Mammary epithelial cell (primary cell): ENCODE measurements at regions of chr11 and their contacts with region 1.

Region 1: DNA sequence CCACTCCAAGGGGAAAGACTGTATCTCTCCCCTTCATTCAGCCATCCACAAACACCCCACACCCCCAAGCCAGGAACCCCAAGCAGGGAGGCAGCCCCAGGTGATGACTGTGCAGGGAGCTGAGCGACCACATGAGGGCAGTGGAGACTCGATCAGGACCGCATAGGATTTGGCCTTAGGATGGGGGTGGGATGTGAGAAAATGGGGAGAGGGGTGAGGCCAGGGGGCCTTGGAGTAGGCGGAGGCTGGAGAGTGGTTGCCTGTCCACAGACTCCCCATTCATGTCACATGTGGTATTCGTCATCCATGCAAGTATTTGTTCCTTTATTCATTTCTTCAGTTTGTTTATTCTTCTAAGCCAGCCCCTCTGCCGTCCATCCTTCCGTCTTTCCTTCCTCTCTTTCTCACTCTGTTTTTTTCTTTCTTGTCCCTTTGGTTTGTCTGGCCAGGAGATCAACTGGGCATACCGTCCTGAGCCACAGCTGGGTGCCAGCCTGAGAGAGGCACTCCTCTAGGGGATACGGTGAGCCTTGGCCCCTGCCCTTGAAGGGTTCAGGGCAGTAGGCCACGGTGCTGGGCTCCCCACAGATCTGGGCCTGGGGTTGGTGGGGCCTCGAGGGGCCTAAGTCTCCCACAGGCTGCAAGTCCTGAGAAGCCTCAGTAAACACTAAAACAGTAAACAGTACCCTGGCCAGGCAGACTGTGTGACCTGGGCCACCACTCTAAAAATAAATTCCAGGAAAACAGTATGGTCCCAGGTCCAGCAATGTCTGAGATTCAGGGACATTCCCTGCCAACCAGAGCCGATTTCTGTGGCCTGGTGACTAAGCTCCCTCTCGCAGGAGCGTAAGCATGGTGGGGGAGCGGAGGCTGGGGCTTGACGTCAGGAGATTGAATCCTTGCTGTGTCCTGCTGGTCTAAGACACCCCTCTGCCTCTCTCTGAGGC is 2.5 kb upstream of the RHOD start:
- DNase-seq: peak; percentile 57
- H3K4me3 ChIP-seq: no peak overlapping the region
- H3K27ac ChIP-seq: peak overlapping the region; percentile 99
- H3K4me1 ChIP-seq: peaks cover 42% of the 10 kb centered on the region
- H3K27me3 ChIP-seq: no peaks in the 10 kb centered on the region
- CTCF ChIP-seq: peak; percentile 89 to 95

Region 2: DNA sequence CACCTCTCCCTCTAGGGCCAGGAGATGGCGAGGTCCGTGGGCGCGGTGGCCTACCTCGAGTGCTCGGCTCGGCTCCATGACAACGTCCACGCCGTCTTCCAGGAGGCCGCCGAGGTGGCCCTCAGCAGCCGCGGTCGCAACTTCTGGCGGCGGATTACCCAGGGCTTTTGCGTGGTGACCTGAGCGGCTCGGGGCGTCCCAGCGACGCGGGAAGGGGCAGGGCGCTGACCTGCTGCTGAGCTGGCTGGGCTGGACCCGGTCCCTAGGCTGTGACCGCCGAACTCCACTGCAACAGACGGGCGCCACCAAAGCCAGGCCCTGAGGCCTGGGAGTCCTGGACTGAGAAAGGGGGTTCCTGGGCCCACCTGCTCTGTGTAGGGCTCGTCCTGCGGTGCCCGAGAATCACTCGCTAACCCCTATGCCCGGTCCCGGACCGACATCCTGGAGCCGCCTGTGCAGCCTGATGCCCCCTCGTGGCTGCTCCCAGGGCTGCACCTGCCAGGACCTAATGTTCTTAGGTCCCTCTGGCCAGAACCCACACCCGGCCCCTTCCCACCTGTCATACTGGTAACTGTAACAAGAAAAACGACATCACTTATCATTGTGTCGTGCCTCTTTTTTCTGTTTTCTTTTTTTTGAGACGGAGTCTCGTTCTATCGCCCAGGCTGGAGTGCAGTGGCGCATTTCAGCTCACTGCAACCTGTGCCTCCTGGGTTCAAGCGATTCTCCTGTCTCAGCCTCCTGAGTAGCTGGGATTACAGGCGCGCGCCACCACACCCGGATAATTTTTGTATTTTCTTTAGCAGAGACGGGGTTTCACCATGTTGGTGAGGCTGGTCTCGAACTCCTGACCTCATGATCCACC is 17.5 kb after region 1 on chr11:
- CTCF ChIA-PET with region 1: no interaction called
- dilution Hi-C with region 1: no loop called
- in situ Hi-C with region 1: no loop called
- intact Hi-C with region 1: loop called (anchors 1 kb)
- DNase-seq: no peak
- H3K4me3 ChIP-seq: no peak overlapping the region
- H3K27ac ChIP-seq: no peak overlapping the region
- H3K4me1 ChIP-seq: no peaks in the 10 kb centered on the region
- H3K27me3 ChIP-seq: no peaks in the 10 kb centered on the region
- CTCF ChIP-seq: peak; percentile 55 to 83

Region 3: DNA sequence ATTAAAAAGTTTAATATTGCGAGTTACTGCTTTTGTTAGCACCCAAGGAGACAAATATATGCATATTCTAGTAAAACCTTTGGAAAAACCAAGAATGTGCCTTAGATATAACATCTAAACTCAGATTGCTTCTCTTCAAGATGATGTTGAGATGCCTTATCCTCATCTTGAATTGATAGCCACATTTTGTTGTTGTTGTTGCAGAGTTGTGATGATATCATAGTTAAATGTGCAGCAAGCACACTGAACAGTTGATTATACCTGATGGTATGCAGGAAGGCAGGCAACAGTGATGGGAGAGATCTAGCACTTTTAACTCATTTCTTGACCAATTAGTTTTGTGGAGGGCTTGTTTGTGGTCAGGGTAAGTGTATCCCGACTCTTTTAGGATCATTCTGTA is 112.9 kb after region 1 on chr11:
- CTCF ChIA-PET with region 1: no interaction called
- dilution Hi-C with region 1: no loop called
- in situ Hi-C with region 1: no loop called
- intact Hi-C with region 1: loop called (anchors 1 kb)
- DNase-seq: no peak
- H3K4me3 ChIP-seq: no peak overlapping the region
- H3K27ac ChIP-seq: no peak overlapping the region
- H3K4me1 ChIP-seq: peaks cover 16% of the 10 kb centered on the region
- H3K27me3 ChIP-seq: no peaks in the 10 kb centered on the region
- CTCF ChIP-seq: no peak

Region 4: GRCh38 chr11:67252831-67253239 is 198.7 kb after region 1 on chr11:
- CTCF ChIA-PET with region 1: no interaction called
- dilution Hi-C with region 1: no loop called
- in situ Hi-C with region 1: loop called in 1 of 2 experiments (anchors 10 kb)
- intact Hi-C with region 1: loop called (anchors 5 kb)
- DNase-seq: peak; percentile 49
- H3K4me3 ChIP-seq: no peak overlapping the region
- H3K27ac ChIP-seq: peak overlapping the region; percentile 34
- H3K4me1 ChIP-seq: peaks cover 32% of the 10 kb centered on the region
- H3K27me3 ChIP-seq: no peaks in the 10 kb centered on the region
- CTCF ChIP-seq: peak; percentile 70 to 80

Region 5: DNA sequence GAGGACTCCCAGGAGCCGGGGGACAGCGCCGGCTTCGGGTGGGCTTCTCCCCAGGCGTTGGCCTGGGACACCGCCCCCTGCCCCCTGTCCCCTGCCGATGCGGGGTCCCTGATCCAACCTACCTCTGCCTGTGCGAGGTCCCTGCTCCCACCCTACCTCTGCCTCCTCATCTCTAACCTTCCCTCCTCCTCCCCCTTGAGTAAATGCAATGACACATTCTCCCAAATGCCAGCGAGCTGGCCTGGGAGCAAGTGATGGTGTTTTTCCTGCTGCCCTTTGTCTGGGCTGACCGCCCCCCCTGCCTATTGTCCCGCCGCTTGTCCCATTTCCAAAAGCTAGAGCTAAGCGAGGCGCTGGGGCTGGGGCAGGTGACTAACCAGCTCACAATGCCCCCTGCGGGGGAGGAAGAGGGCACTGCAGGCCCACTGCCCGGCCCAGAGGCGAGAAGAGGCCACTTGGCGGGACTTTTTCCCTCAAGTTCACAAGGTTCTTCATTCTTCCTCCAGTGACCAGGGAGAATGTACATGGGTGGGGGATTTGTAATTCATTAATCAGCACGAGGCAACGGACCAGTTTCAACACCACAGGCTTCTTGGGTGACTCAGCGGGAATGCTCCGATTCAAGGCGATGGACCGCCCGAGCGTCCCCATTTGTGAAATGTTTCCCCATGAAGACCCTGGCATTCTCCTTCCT is 319.9 kb after region 1 on chr11:
- CTCF ChIA-PET with region 1: interaction called, 3 read pairs
- dilution Hi-C with region 1: no loop called
- in situ Hi-C with region 1: no loop called
- intact Hi-C with region 1: loop called (anchors 1 kb)
- DNase-seq: peak; percentile 97
- H3K4me3 ChIP-seq: peak overlapping the region; percentile 66 to 84 (median 72)
- H3K27ac ChIP-seq: peak overlapping the region; percentile 95
- H3K4me1 ChIP-seq: peaks cover 54% of the 10 kb centered on the region
- H3K27me3 ChIP-seq: no peaks in the 10 kb centered on the region
- CTCF ChIP-seq: peak; percentile 14 to 36